ENCODE measurements at regions of chr2 and their contacts with region 1.

Region 1: DNA sequence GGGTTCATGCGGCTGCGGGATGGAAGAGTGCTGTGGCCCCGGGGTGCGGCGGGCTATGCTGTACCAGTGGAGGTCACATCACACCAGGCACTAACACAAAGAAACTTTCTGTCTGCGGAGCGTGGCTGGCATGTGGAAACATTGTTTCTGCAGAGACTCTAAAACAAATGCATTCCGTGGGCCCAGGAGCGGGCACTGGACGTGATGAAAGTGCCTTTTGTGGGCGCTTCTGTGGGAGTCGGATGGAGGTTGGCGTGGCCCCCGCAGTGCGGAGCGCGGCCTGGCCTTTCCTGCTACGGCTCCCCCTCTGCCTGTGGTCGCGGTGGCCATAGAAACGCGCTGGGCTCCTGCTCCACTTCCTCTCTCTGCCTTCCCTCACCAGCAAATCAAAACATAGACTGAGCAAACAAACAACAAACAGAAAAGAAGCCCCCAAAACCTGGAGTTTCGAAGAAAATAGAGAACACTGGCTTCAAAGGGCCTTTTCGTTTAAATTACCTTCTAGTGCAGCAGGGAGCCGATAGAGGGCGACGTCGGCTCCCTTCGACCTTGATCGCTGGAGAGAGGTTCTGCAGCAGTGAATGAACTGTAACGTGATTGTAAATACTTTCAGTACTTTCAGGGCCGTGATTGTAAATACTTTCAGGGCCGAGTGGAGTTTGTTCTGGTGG is 51.4 kb downstream of the KIF5C start:
- DNase-seq: no peak

Region 2: GRCh38 chr2:147182260-147182659 is 1744.2 kb before region 1 on chr2:
- intact Hi-C with region 1: loop called in 1 of 2 experiments (anchors 5 kb)
- DNase-seq: no peak

Region 3: GRCh38 chr2:148981324-148981723 is 54.9 kb after region 1 on chr2:
- intact Hi-C with region 1: loop called in 1 of 2 experiments (anchors 2 kb)
- DNase-seq: no peak